ENCODE measurements at regions of chr11 and their contacts with region 1.

Region 1: DNA sequence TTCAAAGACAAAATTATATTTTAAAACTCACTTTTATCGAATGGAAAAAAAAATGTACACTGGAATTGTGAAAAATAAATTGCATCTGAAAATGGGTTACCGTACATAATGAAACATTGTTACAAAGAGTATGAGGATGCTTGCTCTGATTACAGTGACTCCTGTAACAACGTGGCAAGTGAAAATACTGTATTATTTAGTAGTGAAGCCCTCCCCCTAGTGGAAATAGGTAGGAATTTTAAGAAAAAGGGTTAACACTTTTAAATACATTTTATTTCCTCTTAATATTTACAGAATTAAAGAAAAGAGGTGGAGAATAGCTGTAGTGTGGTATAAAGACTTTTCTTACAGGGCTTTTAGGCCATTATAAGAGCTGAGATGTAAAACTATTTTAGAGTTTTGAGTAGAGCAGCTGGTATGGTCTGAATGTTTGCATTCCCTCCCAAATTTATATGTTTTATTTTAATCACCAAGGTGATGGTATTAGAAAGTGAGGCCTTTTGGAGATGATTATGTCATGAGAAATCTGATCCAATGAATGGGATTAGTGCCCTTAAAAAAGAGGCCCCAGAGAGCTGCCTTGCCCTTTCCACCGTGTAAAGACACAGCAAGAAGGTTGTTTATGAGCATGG is 25.2 kb downstream of the FAM76B start:
- DNase-seq: no peak
- ATAC-seq: peak in 6 of 8 donors; percentile 50 to 74 (median 58)
- H3K4me3 ChIP-seq: no peak overlapping the region
- H3K27ac ChIP-seq: no peak overlapping the region
- H3K4me1 ChIP-seq: peaks cover 0 to 12% (median 0%) of the 10 kb centered on the region in 9 donors
- H3K27me3 ChIP-seq: peaks cover 0 to 5% (median 0%) of the 10 kb centered on the region in 7 donors
- CTCF ChIP-seq: peak; percentile 44 to 80 (median 74)

Region 2: DNA sequence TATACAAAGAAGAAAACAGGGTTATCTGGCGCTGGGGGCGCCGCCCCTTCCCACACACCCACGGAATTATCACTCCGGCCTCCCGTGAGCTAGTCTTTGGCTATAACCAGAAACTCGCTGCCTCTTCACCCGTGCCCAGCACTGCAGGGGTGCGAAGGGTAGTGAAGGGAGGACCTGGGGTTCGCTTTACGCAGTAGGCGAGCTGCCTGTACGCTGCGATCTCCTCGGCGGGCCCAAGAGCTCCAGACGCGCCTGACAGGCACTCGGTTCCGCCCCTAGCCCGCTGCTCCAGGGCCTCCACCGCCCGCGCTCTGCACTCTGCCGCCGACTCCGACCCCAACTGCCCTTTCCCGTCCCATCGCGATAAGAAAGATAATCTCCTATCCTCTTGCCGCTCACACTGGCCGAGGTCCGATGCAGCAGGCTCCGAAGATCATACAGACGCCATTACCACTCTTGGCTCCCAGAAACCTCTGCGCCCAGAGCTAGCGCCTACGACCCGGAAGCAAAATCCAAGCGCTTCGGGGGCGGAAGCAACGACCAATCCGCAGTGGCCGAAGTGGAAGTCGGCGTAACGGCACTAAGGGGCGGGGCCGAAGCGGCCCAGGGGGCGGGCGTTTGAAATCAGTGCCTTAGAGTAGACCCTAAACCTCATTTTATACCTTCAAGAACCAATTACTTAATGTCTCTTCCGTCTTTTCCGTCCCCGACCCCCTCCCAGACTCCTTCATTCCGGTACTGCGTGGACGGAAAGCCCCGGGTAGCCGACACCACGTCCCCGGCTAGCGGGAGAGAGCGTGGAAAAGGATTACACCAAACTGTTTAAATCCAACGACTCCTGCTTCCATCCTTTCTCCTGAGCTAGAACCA is 791.0 kb before region 1 on chr11 and contains the starts of genes CWC15 and KDM4D:
- intact Hi-C with region 1: loop called in 4 of 10 experiments (anchors 10 kb)
- DNase-seq: peak; percentile 94 to 96
- ATAC-seq: peak; percentile 100
- H3K4me3 ChIP-seq: peak within 1 kb of the TSS; percentile 67 to 97 (median 84)
- H3K27ac ChIP-seq: peak within 1 kb of the TSS in 9 of 10 donors; percentile 56 to 88 (median 81)
- H3K4me1 ChIP-seq: peaks cover 2 to 26% (median 15%) of the 10 kb centered on the region in 9 donors
- H3K27me3 ChIP-seq: no peaks in the 10 kb centered on the region
- CTCF ChIP-seq: no peak
- total RNA-seq, gene CWC15: 53.1 to 75.4 (median 67.3) TPM
- total RNA-seq, gene KDM4D: 0.79 to 1.3 (median 1.0) TPM

Region 3: DNA sequence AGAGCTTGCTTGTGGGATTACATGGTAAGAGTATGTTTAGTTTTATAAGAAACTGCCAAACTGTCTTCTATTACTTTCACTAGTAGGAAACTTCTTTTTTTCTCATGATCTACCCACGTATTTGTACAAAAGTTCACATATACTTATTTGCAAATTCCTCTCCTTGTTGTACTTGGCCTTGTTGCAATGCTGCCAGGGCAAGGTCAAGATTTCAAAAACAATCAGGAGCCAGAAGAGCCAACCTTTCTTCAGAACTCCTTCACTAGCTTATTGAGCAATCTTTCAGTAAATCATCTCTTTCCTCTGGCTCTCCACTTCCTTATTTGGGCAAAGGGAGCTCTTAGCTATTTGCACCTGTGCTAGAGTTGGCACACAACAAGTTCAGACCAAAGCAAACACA is 688.0 kb before region 1 on chr11:
- intact Hi-C with region 1: loop called in 2 of 10 experiments (anchors 10 kb)
- DNase-seq: no peak
- ATAC-seq: peak in 1 of 8 donors; percentile 25
- H3K4me3 ChIP-seq: no peak overlapping the region
- H3K27ac ChIP-seq: no peak overlapping the region
- H3K4me1 ChIP-seq: peaks cover 0 to 25% (median 15%) of the 10 kb centered on the region in 9 donors
- H3K27me3 ChIP-seq: no peaks in the 10 kb centered on the region
- CTCF ChIP-seq: no peak

Region 4: GRCh38 chr11:95231127-95231880 is 533.1 kb before region 1 on chr11 and contains the start of gene SESN3:
- intact Hi-C with region 1: loop called in 1 of 10 experiments (anchors 10 kb)
- DNase-seq: peak; percentile 98 to 99
- ATAC-seq: peak; percentile 94 to 99 (median 98)
- H3K4me3 ChIP-seq: peak within 1 kb of the TSS; percentile 63 to 94 (median 84)
- H3K27ac ChIP-seq: peak within 1 kb of the TSS; percentile 70 to 90 (median 88)
- H3K4me1 ChIP-seq: peaks cover 0 to 37% (median 21%) of the 10 kb centered on the region in 9 donors
- H3K27me3 ChIP-seq: no peaks in the 10 kb centered on the region
- CTCF ChIP-seq: peak in 3 of 9 donors; percentile 38 to 45 (median 39)
- total RNA-seq, gene SESN3: 2.6 to 15.4 (median 10.2) TPM

Region 5: GRCh38 chr11:95715777-95716241 is 48.6 kb before region 1 on chr11:
- intact Hi-C with region 1: loop called in 1 of 10 experiments (anchors 10 kb)
- DNase-seq: no peak
- ATAC-seq: peak in 2 of 8 donors; percentile 48 to 57
- H3K4me3 ChIP-seq: no peak overlapping the region
- H3K27ac ChIP-seq: peak overlapping the region in 1 of 10 donors; percentile 23
- H3K4me1 ChIP-seq: peaks cover 0 to 9% (median 0%) of the 10 kb centered on the region in 9 donors
- H3K27me3 ChIP-seq: peaks cover 0 to 5% (median 0%) of the 10 kb centered on the region in 7 donors
- CTCF ChIP-seq: no peak